ENCODE measurements at regions of chr3 and their contacts with region 1.

Region 1: DNA sequence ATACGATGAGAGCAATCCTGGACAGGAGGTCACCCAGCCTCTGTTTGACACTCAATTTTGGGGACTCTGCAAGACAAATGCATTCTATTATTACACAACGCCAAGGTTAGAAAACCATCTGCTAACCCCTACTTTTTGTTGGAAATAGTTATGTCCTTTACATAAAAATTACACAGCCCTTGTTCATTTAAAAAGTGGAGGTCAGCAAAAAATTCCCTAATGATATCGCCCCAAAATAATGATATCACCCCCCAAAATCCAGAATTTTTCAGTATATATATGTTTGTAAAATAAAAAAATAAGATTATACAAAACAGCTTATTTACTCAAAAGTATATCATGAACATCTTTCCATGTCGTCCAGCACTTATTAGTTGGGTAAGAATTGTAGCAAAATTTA is 11.4 kb downstream of the ROPN1 start:
- DNase-seq: no peak
- ATAC-seq: no peak
- H3K4me3 Mint-ChIP-seq: peak overlapping the region; percentile 66; the same call in 1 of the 2 replicates
- H3K27ac Mint-ChIP-seq: no peak overlapping the region
- H3K4me1 Mint-ChIP-seq: peaks cover 11% of the 10 kb centered on the region
- H3K27me3 Mint-ChIP-seq: peaks cover 20% of the 10 kb centered on the region
- CTCF ChIP-seq: no peak

Region 2: DNA sequence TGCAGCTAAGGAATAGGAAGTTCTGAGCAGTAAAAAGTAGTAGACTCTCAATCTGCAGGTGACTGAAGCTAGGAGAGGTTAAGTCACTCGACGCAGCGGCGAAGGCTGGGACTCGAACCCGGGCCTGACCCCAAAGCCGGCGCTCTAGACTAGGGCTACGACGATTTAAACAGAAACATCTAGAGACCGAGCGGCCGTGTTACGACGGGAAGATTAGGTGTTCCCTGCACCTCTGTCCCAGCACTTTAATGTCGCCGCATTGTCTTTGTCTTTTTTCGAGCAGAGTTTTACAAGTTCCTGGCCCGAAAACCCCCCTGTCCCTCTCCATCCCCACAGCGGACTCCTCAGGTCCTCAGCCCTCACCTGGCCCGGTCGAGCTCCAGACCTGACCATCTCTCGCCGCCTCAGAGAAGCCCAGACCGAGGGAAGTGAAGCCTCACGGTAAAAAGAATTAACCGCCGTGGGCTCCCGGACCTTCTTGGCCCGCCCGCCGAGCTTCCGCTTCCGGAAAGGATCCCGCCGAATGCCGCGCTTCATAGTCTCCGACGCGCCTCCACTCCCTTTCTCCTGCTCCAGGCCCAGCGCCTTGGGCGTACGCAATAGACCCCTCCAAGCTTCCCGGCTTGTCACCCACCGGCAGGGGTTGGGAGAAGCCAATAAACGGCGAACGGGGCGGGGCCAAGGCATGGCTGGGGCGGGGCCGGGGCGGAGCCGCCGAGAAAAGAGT is 19.6 kb before region 1 on chr3 and contains the start of gene CCDC14:
- CTCF ChIA-PET with region 1: interaction called, 14 read pairs
- POLR2A ChIA-PET with region 1: interaction called, 3 read pairs
- DNase-seq: peak; percentile 98
- ATAC-seq: peak; percentile 100
- H3K4me3 Mint-ChIP-seq: peak within 1 kb of the TSS; percentile 93
- H3K27ac Mint-ChIP-seq: peak within 1 kb of the TSS; percentile 92
- H3K4me1 Mint-ChIP-seq: peaks cover 16% of the 10 kb centered on the region
- H3K27me3 Mint-ChIP-seq: peaks cover 38% of the 10 kb centered on the region
- CTCF ChIP-seq: no peak
- total RNA-seq, gene CCDC14: 52.4 to 67.0 TPM (median 64.1 TPM) in 3 replicates

Region 3: DNA sequence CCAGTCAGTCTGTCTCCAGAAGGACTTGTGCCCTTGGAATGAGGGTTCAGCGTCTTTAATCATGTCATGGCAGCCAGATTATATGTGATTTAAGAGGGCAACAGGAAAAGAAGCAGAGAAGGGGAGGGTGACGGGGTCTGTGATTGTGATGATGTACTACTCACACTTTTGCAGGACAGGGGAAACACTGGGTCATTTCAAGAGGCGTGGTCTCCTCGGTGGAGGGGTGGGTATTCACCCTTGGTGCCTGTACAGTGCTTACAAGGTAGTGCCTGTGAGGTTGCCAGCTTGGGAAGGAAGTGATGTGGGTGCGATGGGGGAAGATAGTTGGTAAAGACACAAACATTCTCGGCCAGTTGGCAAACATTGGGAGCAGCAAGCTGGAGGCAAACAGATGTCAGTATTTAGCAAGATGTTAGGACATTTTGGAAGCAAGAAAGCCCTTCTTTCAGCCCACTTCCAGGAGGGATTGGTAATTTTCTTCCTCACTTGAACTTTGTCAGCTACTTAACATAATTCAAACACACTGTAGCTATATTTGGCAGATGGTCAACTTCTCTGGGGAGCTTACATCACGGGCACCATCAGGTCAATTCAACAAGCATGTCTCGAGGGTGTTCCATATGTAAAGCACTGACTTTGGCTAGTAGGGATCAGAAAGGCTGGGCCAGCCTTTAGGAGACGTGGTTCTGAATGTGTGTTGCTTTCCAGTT is 82.8 kb after region 1 on chr3:
- CTCF ChIA-PET with region 1: no interaction called
- POLR2A ChIA-PET with region 1: no interaction called
- DNase-seq: no peak
- ATAC-seq: no peak
- H3K4me3 Mint-ChIP-seq: no peak overlapping the region
- H3K27ac Mint-ChIP-seq: no peak overlapping the region
- H3K4me1 Mint-ChIP-seq: no peaks in the 10 kb centered on the region; the same call in 1 of the 2 replicates
- H3K27me3 Mint-ChIP-seq: peaks cover 2% of the 10 kb centered on the region
- CTCF ChIP-seq: no peak

Measured in WTC11 (cell line).